ENCODE measurements at regions of chr2 and their contacts with region 1.

Region 1: GRCh38 chr2:127872354-127872753 is 13.4 kb downstream of the AMMECR1L start:
- DNase-seq: no peak
- H3K4me3 ChIP-seq: no peak overlapping the region
- H3K27ac ChIP-seq: no peak overlapping the region
- H3K4me1 ChIP-seq: no peaks in the 10 kb centered on the region
- H3K27me3 ChIP-seq: no peaks in the 10 kb centered on the region
- CTCF ChIP-seq: no peak
- EP300 ChIP-seq: no peak
- RAD21 ChIP-seq: no peak

Region 2: DNA sequence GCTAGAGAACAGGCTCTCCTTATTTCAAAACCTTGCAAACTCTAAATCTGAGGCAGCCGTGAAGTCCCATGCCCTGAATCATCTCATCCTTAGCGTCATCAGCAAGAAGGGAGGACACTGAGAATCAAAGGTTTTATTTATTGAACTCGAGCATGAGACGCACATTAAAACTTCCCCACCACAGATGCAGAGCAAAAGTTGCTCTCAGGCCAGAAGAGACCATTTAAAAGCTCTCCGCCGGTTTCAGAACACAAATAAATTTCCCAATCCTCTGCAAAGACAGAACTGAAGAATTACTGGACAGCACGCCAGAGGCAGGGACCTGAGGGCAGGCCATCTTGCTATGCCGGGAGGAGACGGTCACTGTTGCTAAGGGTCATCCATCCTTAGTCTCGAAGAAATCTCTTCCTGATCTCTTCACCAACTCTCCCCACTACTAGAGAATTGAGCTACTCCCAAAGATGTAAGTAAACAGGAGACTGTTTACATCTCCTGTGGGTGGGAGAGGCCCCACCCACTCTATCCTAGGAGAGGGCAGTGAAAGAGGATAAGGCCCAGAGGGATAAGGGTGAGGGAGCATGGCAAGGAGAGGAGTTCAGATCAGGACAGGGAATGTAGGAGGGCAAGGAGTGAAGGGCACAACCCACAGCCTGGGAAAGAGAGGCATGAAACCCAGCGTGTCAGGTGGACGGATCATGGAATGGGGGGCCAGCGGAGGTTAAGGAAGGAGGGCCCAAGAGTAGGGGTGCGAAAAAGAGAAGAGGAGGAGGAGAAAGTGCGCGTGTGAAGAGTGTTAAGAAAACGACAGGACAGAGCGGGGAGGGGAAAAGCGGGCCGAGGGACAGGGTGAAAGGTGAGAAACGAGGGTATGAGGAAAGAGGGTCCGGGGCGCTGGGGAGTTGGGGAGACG is 12.3 kb after region 1 on chr2:
- CTCF ChIA-PET with region 1: interaction called, 11 read pairs
- POLR2A ChIA-PET with region 1: no interaction called
- DNase-seq: peak; percentile 28
- H3K4me3 ChIP-seq: peak overlapping the region; percentile 50 to 69
- H3K27ac ChIP-seq: peak overlapping the region in 1 of 2 experiments; percentile 82; a peak in 3 of 4 replicates
- H3K4me1 ChIP-seq: peaks cover 10 to 22% of the 10 kb centered on the region in 2 experiments; a peak in 2 of 4 replicates
- H3K27me3 ChIP-seq: no peaks in the 10 kb centered on the region
- CTCF ChIP-seq: no peak
- EP300 ChIP-seq: no peak
- RAD21 ChIP-seq: no peak